ENCODE measurements at regions of chr20 and their contacts with region 1.

Region 1: DNA sequence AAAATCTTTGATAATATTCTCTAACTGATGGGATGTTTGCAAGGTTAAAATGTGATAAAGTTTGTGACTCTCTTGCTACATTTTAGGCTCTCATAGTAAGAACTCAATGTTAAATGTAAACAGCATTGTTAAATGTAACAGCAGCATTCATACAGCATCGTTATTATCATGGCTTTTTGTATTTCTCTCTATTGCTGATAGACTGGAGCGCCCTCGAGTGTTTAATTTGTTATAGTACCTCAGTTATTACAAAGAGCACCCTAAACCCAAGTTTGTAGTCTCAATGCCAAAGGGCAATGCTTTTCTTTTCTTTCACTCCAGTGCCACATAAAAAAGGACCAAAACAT is 14.9 kb upstream of the TTPAL start:
- DNase-seq: no peak
- H3K4me3 ChIP-seq: no peak overlapping the region
- H3K27me3 ChIP-seq: peaks cover under 1% of the 10 kb centered on the region
- CTCF ChIP-seq: peak; percentile 42

Region 2: GRCh38 chr20:44217342-44218092 is 243.3 kb before region 1 on chr20:
- CTCF ChIA-PET with region 1: interaction called, 30 read pairs
- POLR2A ChIA-PET with region 1: no interaction called
- DNase-seq: no peak
- H3K4me3 ChIP-seq: no peak overlapping the region
- H3K27me3 ChIP-seq: no peaks in the 10 kb centered on the region
- CTCF ChIP-seq: peak; percentile 96

Region 3: GRCh38 chr20:44475694-44476560 is 15.2 kb after region 1 on chr20 and contains the start of gene TTPAL:
- CTCF ChIA-PET with region 1: interaction called, 12 read pairs
- POLR2A ChIA-PET with region 1: no interaction called
- DNase-seq: peak; percentile 19
- H3K4me3 ChIP-seq: peak within 1 kb of the TSS; percentile 68
- H3K27me3 ChIP-seq: no peaks in the 10 kb centered on the region
- CTCF ChIP-seq: peak; percentile 54
- polyA plus RNA-seq, gene TTPAL: 9.4 and 13.8 TPM in 2 replicates

Region 4: GRCh38 chr20:44496976-44497375 is 36.2 kb after region 1 on chr20:
- CTCF ChIA-PET with region 1: no interaction called
- POLR2A ChIA-PET with region 1: no interaction called
- DNase-seq: peak; percentile 60
- H3K4me3 ChIP-seq: no peak overlapping the region
- H3K27me3 ChIP-seq: no peaks in the 10 kb centered on the region
- CTCF ChIP-seq: no peak

Region 5: GRCh38 chr20:44521484-44522481 is 61.0 kb after region 1 on chr20 and contains the start of gene SERINC3:
- CTCF ChIA-PET with region 1: no interaction called
- POLR2A ChIA-PET with region 1: no interaction called
- DNase-seq: peak; percentile 64
- H3K4me3 ChIP-seq: peak within 1 kb of the TSS; percentile 100
- H3K27me3 ChIP-seq: no peaks in the 10 kb centered on the region
- CTCF ChIP-seq: no peak
- polyA plus RNA-seq, gene SERINC3: 284 and 333 TPM in 2 replicates

Measured in BJ (cell line).